ENCODE measurements at regions of chr10 and their contacts with region 1.

Region 1: GRCh38 chr10:110007701-110008517 is at the start of gene ADD3:
- DNase-seq: peak; percentile 69
- H3K4me3 ChIP-seq: peak within 1 kb of the TSS; percentile 81 to 91 (median 85)
- H3K27ac ChIP-seq: peak within 1 kb of the TSS; percentile 34
- H3K4me1 ChIP-seq: peaks cover 30% of the 10 kb centered on the region
- H3K27me3 ChIP-seq: no peaks in the 10 kb centered on the region
- CTCF ChIP-seq: no peak
- total RNA-seq, gene ADD3: 24.8 to 67.5 TPM

Region 2: GRCh38 chr10:109934958-109935706 is 72.8 kb before region 1 on chr10:
- CTCF ChIA-PET with region 1: no interaction called
- dilution Hi-C with region 1: no loop called
- in situ Hi-C with region 1: no loop called
- intact Hi-C with region 1: loop called (anchors 5 kb)
- DNase-seq: peak; percentile 56
- H3K4me3 ChIP-seq: no peak overlapping the region
- H3K27ac ChIP-seq: no peak overlapping the region
- H3K4me1 ChIP-seq: peaks cover 11% of the 10 kb centered on the region
- H3K27me3 ChIP-seq: no peaks in the 10 kb centered on the region
- CTCF ChIP-seq: no peak

Region 3: DNA sequence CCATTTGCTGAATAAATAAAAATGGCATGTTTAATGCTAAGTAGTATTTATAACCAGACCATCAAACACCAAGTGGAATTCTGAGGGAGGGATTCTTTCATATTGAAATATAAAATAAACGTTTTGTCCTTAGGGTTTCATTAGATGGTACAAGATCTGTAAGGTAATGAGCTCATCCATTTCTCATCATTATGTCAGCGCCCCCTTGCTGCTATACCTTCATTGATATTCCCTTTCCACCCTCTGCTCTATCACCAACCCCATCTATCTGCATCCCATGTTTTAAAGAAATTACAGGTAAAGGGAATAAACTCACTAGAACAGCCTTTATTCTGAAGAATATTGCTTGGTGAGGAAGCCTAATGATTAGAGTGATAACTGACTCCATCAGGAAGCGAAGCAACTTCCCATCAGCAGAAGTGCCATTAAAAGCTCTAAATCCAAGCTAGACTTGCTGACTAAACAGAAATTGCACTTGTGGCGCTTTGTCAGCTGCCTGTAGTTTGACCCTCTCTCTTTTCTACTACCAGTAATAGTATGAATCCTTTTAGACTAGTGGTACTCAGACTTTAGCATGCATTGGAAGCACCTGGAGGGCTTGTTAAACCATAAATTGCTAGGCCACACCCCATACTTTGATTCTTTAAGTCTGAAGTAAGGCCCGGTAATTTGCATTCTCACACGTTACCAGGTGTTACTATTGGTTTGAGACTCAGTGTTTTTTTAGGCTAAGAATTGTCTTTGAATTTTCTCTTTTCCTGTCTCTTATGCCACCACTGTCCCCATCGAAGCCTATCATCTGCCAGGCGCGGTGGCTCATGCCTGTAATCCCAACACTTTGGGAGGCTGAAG is 27.4 kb after region 1 on chr10:
- CTCF ChIA-PET with region 1: no interaction called
- dilution Hi-C with region 1: no loop called
- in situ Hi-C with region 1: no loop called
- intact Hi-C with region 1: loop called (anchors 2 kb)
- DNase-seq: no peak
- H3K4me3 ChIP-seq: no peak overlapping the region
- H3K27ac ChIP-seq: no peak overlapping the region
- H3K4me1 ChIP-seq: peaks cover 4% of the 10 kb centered on the region
- H3K27me3 ChIP-seq: no peaks in the 10 kb centered on the region
- CTCF ChIP-seq: no peak

Region 4: GRCh38 chr10:110101464-110102144 is 93.7 kb after region 1 on chr10:
- CTCF ChIA-PET with region 1: no interaction called
- dilution Hi-C with region 1: no loop called
- in situ Hi-C with region 1: no loop called
- intact Hi-C with region 1: loop called (anchors 5 kb)
- DNase-seq: peak; percentile 14
- H3K4me3 ChIP-seq: no peak overlapping the region
- H3K27ac ChIP-seq: no peak overlapping the region
- H3K4me1 ChIP-seq: no peaks in the 10 kb centered on the region
- H3K27me3 ChIP-seq: no peaks in the 10 kb centered on the region
- CTCF ChIP-seq: no peak

Region 5: DNA sequence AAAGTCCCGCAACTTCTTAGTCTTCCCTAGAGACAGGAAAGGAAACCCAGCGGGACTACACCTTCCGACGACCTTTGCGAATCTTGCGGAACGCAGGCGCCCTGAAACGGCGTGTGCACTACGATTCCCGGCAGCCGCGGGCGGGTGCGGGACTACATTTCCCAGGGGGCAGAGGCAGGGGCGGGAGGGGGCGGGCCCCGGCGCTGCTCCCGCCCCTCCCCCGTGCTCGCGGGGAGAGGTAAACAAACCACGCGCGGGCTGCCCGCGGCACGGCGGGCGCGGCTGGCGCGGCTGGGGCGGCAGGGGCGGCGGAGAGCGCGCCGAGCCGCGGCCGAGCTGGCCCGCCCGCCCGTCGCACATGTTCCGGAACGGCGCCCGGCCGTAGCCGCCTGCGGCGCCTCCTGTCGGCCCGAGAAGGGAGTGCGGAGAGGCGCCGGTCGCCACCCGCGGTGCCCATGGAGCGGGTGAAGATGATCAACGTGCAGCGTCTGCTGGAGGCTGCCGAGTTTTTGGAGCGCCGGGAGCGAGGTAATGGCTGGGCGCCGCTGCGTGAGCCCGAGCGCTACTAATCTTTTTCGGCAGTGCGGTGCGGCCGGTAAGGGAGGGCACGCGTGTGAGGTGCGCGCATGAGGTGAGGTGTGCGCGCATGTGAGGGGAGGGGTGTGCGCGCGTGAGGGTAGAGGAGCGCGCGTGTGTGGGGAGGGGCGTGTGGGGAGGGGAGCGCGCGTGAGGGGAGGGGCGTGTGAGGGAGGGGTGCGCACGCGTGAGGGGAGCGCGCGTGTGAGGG is 218.0 kb after region 1 on chr10:
- CTCF ChIA-PET with region 1: no interaction called
- dilution Hi-C with region 1: no loop called
- in situ Hi-C with region 1: no loop called
- intact Hi-C with region 1: loop called (anchors 10 kb)
- DNase-seq: peak; percentile 92
- H3K4me3 ChIP-seq: peak overlapping the region; percentile 73 to 95 (median 92)
- H3K27ac ChIP-seq: peak overlapping the region; percentile 43
- H3K4me1 ChIP-seq: peaks cover 33% of the 10 kb centered on the region
- H3K27me3 ChIP-seq: no peaks in the 10 kb centered on the region
- CTCF ChIP-seq: peak; percentile 54 to 71

Region 6: DNA sequence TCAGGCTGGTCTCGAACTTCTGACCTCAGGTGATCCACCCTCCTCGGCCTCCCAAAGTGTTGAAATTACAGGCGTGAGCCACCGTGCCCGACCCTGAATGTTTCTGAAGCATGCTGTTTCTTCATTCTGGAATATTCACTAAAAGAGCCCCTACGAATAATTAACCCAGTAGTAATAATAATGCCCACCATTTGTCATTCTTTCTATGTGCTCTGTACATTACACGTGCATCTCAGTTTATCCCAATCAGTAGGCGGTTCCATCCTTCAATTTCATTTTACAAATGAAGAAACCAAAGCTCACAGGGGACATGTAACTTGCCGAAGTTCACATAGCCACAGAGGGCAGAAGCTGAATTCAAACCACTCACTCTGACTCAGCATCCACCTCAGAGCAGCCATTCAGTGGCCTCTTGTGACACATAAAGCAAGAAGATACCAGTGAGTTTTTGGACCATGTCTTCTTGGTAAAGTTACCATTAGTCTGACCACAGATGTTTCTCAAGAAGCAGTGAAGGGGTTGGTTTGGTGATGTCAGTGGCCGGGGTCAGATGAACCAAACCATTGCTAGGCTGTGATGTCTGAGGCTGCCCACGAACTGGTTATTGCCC is 417.9 kb after region 1 on chr10:
- CTCF ChIA-PET with region 1: no interaction called
- dilution Hi-C with region 1: no loop called
- in situ Hi-C with region 1: no loop called
- intact Hi-C with region 1: no loop called
- DNase-seq: peak; percentile 86
- H3K4me3 ChIP-seq: no peak overlapping the region
- H3K27ac ChIP-seq: no peak overlapping the region
- H3K4me1 ChIP-seq: peaks cover 12% of the 10 kb centered on the region
- H3K27me3 ChIP-seq: no peaks in the 10 kb centered on the region
- CTCF ChIP-seq: no peak

Measured in mammary epithelial cell (primary cell).